Heart right ventricle (tissue), 16 donors: ENCODE measurements at regions of chr4 and their contacts with region 1.

Region 1: DNA sequence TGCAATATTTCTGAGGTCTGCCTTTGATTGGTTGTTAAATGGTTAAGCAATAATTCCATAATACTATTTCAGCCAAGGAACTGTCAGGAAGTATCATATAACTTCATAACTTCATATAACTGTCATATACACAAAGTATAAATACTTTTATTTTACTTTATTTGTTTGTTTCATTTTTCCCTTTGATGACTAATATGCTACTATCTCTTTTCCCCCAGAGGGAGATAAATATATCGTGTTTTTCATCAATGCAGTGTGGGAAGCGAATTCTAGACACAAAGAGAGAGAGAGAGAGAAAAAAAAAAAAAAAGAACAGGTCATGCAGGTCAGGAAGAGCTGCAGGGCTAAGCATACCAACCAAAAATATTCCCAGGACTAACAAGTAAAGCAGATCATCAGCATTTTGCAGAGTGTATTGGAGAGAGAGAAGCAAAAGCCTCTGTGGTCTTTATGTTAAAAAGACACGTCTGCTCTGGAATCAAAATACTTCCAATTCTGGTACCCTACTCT is 1849.2 kb downstream of the STIM2 start:
- DNase-seq: no peak
- ATAC-seq: no peak
- H3K4me3 ChIP-seq: no peak overlapping the region
- H3K27ac ChIP-seq: no peak overlapping the region
- H3K4me1 ChIP-seq: no peaks in the 10 kb centered on the region
- H3K27me3 ChIP-seq: no peaks in the 10 kb centered on the region
- CTCF ChIP-seq: no peak

Region 2: GRCh38 chr4:27934871-27935270 is 775.0 kb before region 1 on chr4:
- intact Hi-C with region 1: loop called in 1 of 10 experiments (anchors 10 kb)
- DNase-seq: no peak
- ATAC-seq: no peak
- H3K4me3 ChIP-seq: no peak overlapping the region
- H3K27ac ChIP-seq: no peak overlapping the region
- H3K4me1 ChIP-seq: no peaks in the 10 kb centered on the region
- H3K27me3 ChIP-seq: no peaks in the 10 kb centered on the region
- CTCF ChIP-seq: no peak

Region 3: GRCh38 chr4:28654618-28655017 is 55.3 kb before region 1 on chr4:
- intact Hi-C with region 1: loop called in 1 of 10 experiments (anchors 2 kb)
- DNase-seq: no peak
- ATAC-seq: no peak
- H3K4me3 ChIP-seq: no peak overlapping the region
- H3K27ac ChIP-seq: no peak overlapping the region
- H3K4me1 ChIP-seq: no peaks in the 10 kb centered on the region
- H3K27me3 ChIP-seq: no peaks in the 10 kb centered on the region
- CTCF ChIP-seq: no peak